ENCODE measurements at regions of chr1 and their contacts with region 1.

Region 1: DNA sequence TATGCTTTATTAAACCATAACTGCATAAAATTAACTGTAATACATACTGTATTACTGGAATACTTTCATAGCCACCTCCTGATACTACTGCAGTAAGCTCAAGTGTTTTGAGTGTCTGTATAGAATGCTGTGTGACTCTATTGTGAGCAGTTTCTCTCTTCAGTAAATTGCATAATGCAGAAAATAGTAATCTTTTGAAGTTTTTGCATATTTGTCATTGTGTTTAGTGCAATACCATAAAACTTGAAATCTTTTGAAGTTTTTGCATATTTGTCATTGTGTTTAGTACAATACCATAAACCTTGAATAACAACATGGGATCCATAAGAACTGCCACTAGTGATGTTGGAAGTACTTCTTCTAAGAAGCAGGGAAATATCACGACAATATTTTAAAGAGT is 11.2 kb downstream of the TPR start:
- DNase-seq: no peak
- ATAC-seq: no peak
- H3K4me3 ChIP-seq: no peak overlapping the region
- H3K4me3 Mint-ChIP-seq: no peak overlapping the region
- H3K27ac ChIP-seq: no peak overlapping the region
- H3K27ac Mint-ChIP-seq: no peak overlapping the region
- H3K4me1 ChIP-seq: no peaks in the 10 kb centered on the region
- H3K4me1 Mint-ChIP-seq: peaks cover 4 to 31% (median 16%) of the 10 kb centered on the region in 7 donors
- H3K27me3 ChIP-seq: no peaks in the 10 kb centered on the region
- H3K27me3 Mint-ChIP-seq: no peaks in the 10 kb centered on the region

Region 2: GRCh38 chr1:186337554-186337953 is 26.3 kb before region 1 on chr1:
- CTCF ChIA-PET with region 1: interaction called, 5 read pairs
- POLR2A ChIA-PET with region 1: interaction called, 3 read pairs
- intact Hi-C with region 1: loop called in 1 of 2 experiments (anchors 2 kb)
- DNase-seq: no peak
- ATAC-seq: no peak
- H3K4me3 ChIP-seq: no peak overlapping the region
- H3K4me3 Mint-ChIP-seq: no peak overlapping the region
- H3K27ac ChIP-seq: no peak overlapping the region
- H3K27ac Mint-ChIP-seq: peak overlapping the region in 1 of 9 donors; percentile 44
- H3K4me1 ChIP-seq: no peaks in the 10 kb centered on the region
- H3K4me1 Mint-ChIP-seq: no peaks in the 10 kb centered on the region
- H3K27me3 ChIP-seq: no peaks in the 10 kb centered on the region
- H3K27me3 Mint-ChIP-seq: no peaks in the 10 kb centered on the region